GM12878 (cell line): ENCODE measurements at regions of chr19 and their contacts with region 1.

Region 1: GRCh38 chr19:37334179-37335071 is 36.5 kb upstream of the ZNF527 start:
- DNase-seq: peak; percentile 71
- ATAC-seq: peak; percentile 100
- H3K4me3 ChIP-seq: peak overlapping the region; percentile 76
- H3K27ac ChIP-seq: peak overlapping the region; percentile 81
- H3K4me1 ChIP-seq: peaks cover 7% of the 10 kb centered on the region
- H3K27me3 ChIP-seq: no peaks in the 10 kb centered on the region
- CTCF ChIP-seq: 0 out of 6 replicates have a peak, but pooled peaks of 1 of the 3 experiments have one; percentile 3
- EP300 ChIP-seq: no peak; a peak in 1 of 4 replicates
- POLR2A ChIP-seq: peak; percentile 81
- RAD21 ChIP-seq: no peak

Region 2: GRCh38 chr19:37370880-37371661 is 36.6 kb after region 1 on chr19 and contains the start of gene ZNF527:
- CTCF ChIA-PET with region 1: interaction called, 3 read pairs
- POLR2A ChIA-PET with region 1: no interaction called
- RAD21 ChIA-PET with region 1: interaction called, 4 read pairs
- SMC1A ChIA-PET with region 1: no interaction called
- in situ Hi-C with region 1: no loop called
- intact Hi-C with region 1: loop called (anchors 1 kb)
- DNase-seq: peak; percentile 91
- ATAC-seq: peak; percentile 99
- H3K4me3 ChIP-seq: peak within 1 kb of the TSS; percentile 72
- H3K27ac ChIP-seq: peak within 1 kb of the TSS; percentile 63
- H3K4me1 ChIP-seq: no peaks in the 10 kb centered on the region
- H3K27me3 ChIP-seq: no peaks in the 10 kb centered on the region
- CTCF ChIP-seq: no peak
- EP300 ChIP-seq: no peak
- POLR2A ChIP-seq: peak; percentile 92
- RAD21 ChIP-seq: no peak
- polyA plus RNA-seq, gene ZNF527: 2.0 to 2.2 TPM

Region 3: GRCh38 chr19:37506387-37507166 is 172.2 kb after region 1 on chr19 and contains the start of gene ZNF793:
- CTCF ChIA-PET with region 1: no interaction called
- POLR2A ChIA-PET with region 1: no interaction called
- RAD21 ChIA-PET with region 1: no interaction called
- SMC1A ChIA-PET with region 1: no interaction called
- in situ Hi-C with region 1: no loop called
- intact Hi-C with region 1: no loop called
- DNase-seq: no peak
- ATAC-seq: no peak
- H3K4me3 ChIP-seq: peak within 1 kb of the TSS; percentile 71
- H3K27ac ChIP-seq: peak within 1 kb of the TSS; percentile 74
- H3K4me1 ChIP-seq: no peaks in the 10 kb centered on the region
- H3K27me3 ChIP-seq: no peaks in the 10 kb centered on the region
- CTCF ChIP-seq: no peak
- EP300 ChIP-seq: no peak
- POLR2A ChIP-seq: peak; percentile 63
- RAD21 ChIP-seq: no peak
- polyA plus RNA-seq, gene ZNF793: 0.10 to 0.15 TPM